Activated naive CD4-positive, alpha-beta T cell treated with anti-CD3 and anti-CD28 coated beads, Interleukin-2, amount 10 ng/mL, durations not matched to agents 7 days and 5 days (primary cell): ENCODE measurements at regions of chr5 and their contacts with region 1.

Region 1: DNA sequence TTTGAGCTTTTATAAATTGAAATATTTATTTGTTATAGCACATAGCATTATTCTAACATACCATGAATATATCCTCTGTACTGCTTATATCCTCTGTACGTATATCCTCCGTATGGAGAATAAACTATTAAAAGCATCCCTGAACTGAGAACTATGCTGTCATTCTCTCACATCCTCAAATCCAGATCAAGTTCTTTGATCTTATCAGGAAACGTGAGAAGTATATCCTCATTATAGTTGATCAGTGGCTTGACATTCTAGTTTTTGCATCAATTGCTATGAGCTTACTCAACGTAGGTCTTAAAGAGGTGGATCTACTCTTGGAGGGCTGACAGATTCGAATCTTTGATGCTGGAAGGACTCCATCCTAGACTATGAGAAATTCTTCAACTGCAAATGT is 37.4 kb downstream of the IL7R start:
- DNase-seq: no peak
- H3K4me3 Mint-ChIP-seq: no peak overlapping the region
- H3K27ac Mint-ChIP-seq: no peak overlapping the region
- H3K4me1 Mint-ChIP-seq: peaks cover 7% of the 10 kb centered on the region
- H3K27me3 Mint-ChIP-seq: no peaks in the 10 kb centered on the region

Region 2: GRCh38 chr5:35881758-35882157 is 12.4 kb before region 1 on chr5:
- CTCF ChIA-PET with region 1: interaction called, 11 read pairs
- DNase-seq: no peak
- H3K4me3 Mint-ChIP-seq: no peak overlapping the region
- H3K27ac Mint-ChIP-seq: no peak overlapping the region
- H3K4me1 Mint-ChIP-seq: peaks cover 74% of the 10 kb centered on the region
- H3K27me3 Mint-ChIP-seq: no peaks in the 10 kb centered on the region

Region 3: DNA sequence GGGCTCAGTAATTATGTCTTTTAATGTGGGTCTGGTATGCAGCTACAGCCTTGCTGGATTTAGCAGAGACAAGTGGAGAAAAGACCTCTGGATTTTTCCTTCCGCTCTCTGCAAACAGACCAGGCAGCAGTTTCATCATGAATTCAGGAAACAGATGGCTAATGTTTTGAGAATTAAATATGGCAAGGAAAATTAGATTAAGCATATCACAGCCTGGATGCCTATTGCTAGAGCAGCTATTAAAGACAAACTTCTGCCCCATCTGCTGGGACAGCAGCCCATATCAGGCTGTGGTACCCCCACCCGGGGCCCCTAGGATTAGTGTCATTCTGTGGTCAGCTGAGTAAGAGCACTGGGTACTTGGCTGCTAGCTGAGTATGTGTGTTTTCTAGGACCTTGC is 264.0 kb after region 1 on chr5:
- CTCF ChIA-PET with region 1: no interaction called
- DNase-seq: no peak
- H3K4me3 Mint-ChIP-seq: no peak overlapping the region
- H3K27ac Mint-ChIP-seq: no peak overlapping the region
- H3K4me1 Mint-ChIP-seq: peaks cover 55% of the 10 kb centered on the region
- H3K27me3 Mint-ChIP-seq: no peaks in the 10 kb centered on the region